GM12878 (cell line): ENCODE measurements at regions of chr13 and their contacts with region 1.

Region 1: DNA sequence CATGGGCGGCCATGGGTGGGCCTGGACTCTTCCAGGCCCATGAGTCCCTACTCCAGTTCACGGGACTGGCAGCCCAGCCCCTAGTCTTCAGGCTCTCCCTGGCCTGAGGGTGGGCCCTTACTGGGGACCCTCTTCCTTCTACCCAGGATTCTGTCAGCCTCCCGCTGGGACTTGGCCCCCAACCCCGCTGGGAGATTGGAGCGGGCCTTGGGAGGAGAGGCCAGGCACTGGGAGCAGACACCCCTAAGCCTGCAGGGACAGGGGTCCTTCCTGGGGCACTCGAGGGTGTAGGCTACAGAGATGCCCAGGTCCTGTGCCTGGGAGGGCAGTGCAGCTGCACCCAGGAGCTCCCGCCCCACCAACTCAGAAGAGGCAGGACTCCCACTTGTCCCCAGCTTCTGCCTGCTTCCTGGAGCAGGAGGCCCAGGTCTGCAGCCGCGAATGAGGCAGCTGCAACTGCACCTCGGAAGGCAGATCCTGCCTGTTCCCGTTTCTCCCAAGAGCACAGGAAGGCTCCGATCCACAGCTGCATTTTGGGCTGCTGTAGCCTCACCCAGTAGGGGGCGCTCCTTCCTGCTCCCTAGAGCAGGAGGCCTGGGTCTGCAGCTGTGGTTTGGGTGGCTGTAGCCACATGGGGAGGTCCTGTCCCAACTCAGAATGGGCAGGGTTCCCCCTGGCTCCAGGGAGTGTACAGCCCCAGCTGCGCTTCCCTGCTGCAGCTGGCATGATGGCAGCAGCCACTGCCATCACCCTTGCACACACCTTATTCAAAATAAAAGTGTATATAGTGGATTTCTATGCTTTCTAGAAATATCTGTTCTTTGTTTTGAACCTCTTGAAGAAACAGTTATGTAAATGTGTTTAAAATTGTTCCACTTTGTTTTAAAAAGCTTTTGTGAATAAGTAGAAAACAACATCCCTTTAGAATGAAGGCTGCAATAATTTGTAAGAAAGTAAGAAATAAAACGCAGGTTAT is 46.8 kb downstream of the TEX26 start:
- DNase-seq: no peak
- ATAC-seq: peak; percentile 60
- H3K4me3 ChIP-seq: no peak overlapping the region
- H3K27ac ChIP-seq: no peak overlapping the region
- H3K4me1 ChIP-seq: 0 out of 2 replicates have a peak, but pooled peaks cover 1% of the 10 kb centered on the region
- H3K27me3 ChIP-seq: no peaks in the 10 kb centered on the region
- CTCF ChIP-seq: peak; percentile 53 to 88 (median 80)
- EP300 ChIP-seq: no peak
- POLR2A ChIP-seq: no peak
- RAD21 ChIP-seq: peak; percentile 66

Region 2: DNA sequence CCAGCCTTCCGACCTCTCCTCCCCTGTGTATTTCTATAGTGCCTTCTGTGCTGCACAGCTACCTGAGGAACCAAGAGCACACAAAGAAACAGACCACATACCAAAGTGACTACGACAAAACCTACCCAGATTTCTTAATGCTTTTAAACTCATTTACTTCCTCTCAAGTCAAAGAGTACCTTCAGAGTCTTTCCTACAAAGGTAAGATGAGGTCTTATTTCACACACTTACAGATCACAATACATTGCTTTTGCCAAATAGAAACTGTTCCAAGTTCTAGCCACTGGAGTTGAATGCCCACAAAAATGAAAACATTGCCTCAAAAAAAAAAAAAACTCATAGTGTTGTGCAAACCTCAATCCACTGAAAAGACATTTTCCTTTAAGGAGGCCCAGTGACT is 10.4 kb before region 1 on chr13:
- CTCF ChIA-PET with region 1: interaction called, 17 read pairs
- POLR2A ChIA-PET with region 1: no interaction called
- RAD21 ChIA-PET with region 1: no interaction called
- SMC1A ChIA-PET with region 1: interaction called, 5 read pairs
- in situ Hi-C with region 1: no loop called
- intact Hi-C with region 1: no loop called
- DNase-seq: no peak
- ATAC-seq: no peak
- H3K4me3 ChIP-seq: no peak overlapping the region
- H3K27ac ChIP-seq: no peak overlapping the region
- H3K4me1 ChIP-seq: no peaks in the 10 kb centered on the region
- H3K27me3 ChIP-seq: no peaks in the 10 kb centered on the region; a peak in 1 of 4 replicates
- CTCF ChIP-seq: no peak
- EP300 ChIP-seq: no peak
- POLR2A ChIP-seq: no peak
- RAD21 ChIP-seq: no peak

Region 3: DNA sequence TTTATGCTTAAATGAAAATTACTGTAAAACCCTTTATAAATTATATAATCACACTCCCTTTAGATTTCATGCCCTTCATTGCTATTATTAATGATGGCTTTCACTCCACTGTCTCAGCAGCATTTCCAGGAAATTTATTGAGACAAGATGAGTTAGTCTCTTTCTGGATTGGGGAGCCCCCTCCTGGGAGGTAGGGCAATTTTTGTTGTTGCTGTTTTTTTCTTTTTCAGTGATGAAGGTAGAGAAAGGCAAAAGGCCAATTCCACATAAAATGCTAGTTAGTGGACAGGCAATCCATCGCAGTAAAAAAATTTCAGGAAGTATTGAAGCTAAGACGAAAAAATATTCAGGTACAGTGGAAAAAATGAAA is 33.4 kb after region 1 on chr13:
- CTCF ChIA-PET with region 1: interaction called, 16 read pairs
- POLR2A ChIA-PET with region 1: no interaction called
- RAD21 ChIA-PET with region 1: no interaction called
- SMC1A ChIA-PET with region 1: interaction called, 3 read pairs
- in situ Hi-C with region 1: no loop called
- intact Hi-C with region 1: no loop called
- DNase-seq: no peak
- ATAC-seq: no peak
- H3K4me3 ChIP-seq: no peak overlapping the region
- H3K27ac ChIP-seq: no peak overlapping the region
- H3K4me1 ChIP-seq: peaks cover 14% of the 10 kb centered on the region
- H3K27me3 ChIP-seq: no peaks in the 10 kb centered on the region
- CTCF ChIP-seq: peak in 2 of 3 experiments; percentile 5 to 9; a peak in 2 of 6 replicates
- EP300 ChIP-seq: no peak
- POLR2A ChIP-seq: no peak
- RAD21 ChIP-seq: no peak

Region 4: GRCh38 chr13:31038834-31039552 is 59.7 kb after region 1 on chr13:
- CTCF ChIA-PET with region 1: interaction called, 75 read pairs
- POLR2A ChIA-PET with region 1: no interaction called
- RAD21 ChIA-PET with region 1: interaction called, 33 read pairs
- SMC1A ChIA-PET with region 1: interaction called, 25 read pairs
- in situ Hi-C with region 1: no loop called
- intact Hi-C with region 1: loop called (anchors 1 kb)
- DNase-seq: peak; percentile 84
- ATAC-seq: peak; percentile 83
- H3K4me3 ChIP-seq: no peak overlapping the region
- H3K27ac ChIP-seq: no peak overlapping the region
- H3K4me1 ChIP-seq: peaks cover 28% of the 10 kb centered on the region
- H3K27me3 ChIP-seq: no peaks in the 10 kb centered on the region
- CTCF ChIP-seq: no peak
- EP300 ChIP-seq: peak; percentile 60 to 75
- POLR2A ChIP-seq: no peak
- RAD21 ChIP-seq: no peak